ENCODE measurements at regions of chr3 and their contacts with region 1.

Region 1: GRCh38 chr3:163490119-163490518 is 1588.2 kb downstream of the SI start:
- DNase-seq: peak; percentile 53 to 66
- H3K4me3 ChIP-seq: no peak overlapping the region
- H3K4me3 Mint-ChIP-seq: no peak overlapping the region
- H3K27ac Mint-ChIP-seq: no peak overlapping the region
- H3K4me1 ChIP-seq: no peaks in the 10 kb centered on the region
- H3K4me1 Mint-ChIP-seq: no peaks in the 10 kb centered on the region
- H3K27me3 ChIP-seq: no peaks in the 10 kb centered on the region
- H3K27me3 Mint-ChIP-seq: no peaks in the 10 kb centered on the region
- CTCF ChIP-seq: peak; percentile 47 to 61

Region 2: DNA sequence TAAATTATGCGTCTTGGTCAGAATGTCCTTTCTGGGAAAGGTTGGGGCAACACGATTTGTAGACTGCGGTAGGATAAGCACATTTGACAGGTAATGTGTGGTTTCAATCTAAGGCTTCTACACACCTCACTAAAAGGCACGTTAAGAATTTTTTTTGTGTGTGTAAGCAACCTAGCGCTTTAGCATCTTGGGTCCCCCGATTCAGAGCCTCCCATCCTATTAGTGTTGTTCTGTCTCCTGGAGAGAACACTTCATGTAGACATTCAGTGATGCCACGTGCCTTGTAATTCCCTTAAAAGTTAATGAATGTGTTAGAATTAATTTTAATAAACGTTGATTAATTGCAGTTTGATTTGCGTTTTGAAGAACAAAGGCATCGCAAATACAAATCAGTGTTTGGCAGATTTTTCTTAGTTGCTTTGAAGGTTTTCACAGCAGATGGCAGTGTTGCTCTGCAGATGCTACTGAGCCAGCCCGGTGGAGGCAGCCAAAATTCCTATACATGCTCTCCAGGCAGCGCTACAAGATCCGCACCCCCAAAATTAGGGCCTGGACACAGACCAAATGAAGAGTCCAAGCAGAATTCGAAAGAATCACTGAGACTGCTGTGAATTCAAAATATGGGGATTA is 1930.0 kb before region 1 on chr3:
- CTCF ChIA-PET with region 1: no interaction called
- POLR2A ChIA-PET with region 1: no interaction called
- intact Hi-C with region 1: loop called (anchors 1 kb)
- DNase-seq: peak; percentile 36 to 47
- H3K4me3 ChIP-seq: no peak overlapping the region
- H3K4me3 Mint-ChIP-seq: no peak overlapping the region
- H3K27ac Mint-ChIP-seq: no peak overlapping the region
- H3K4me1 ChIP-seq: no peaks in the 10 kb centered on the region
- H3K4me1 Mint-ChIP-seq: no peaks in the 10 kb centered on the region
- H3K27me3 ChIP-seq: no peaks in the 10 kb centered on the region
- H3K27me3 Mint-ChIP-seq: peaks cover 6% of the 10 kb centered on the region
- CTCF ChIP-seq: peak; percentile 53 to 56

Region 3: GRCh38 chr3:163056874-163057497 is 433.1 kb before region 1 on chr3:
- CTCF ChIA-PET with region 1: no interaction called
- POLR2A ChIA-PET with region 1: no interaction called
- intact Hi-C with region 1: loop called (anchors 1 kb)
- DNase-seq: peak in 1 of 2 experiments; percentile 67
- H3K4me3 ChIP-seq: no peak overlapping the region
- H3K4me3 Mint-ChIP-seq: no peak overlapping the region
- H3K27ac Mint-ChIP-seq: no peak overlapping the region
- H3K4me1 ChIP-seq: no peaks in the 10 kb centered on the region
- H3K4me1 Mint-ChIP-seq: no peaks in the 10 kb centered on the region
- H3K27me3 ChIP-seq: no peaks in the 10 kb centered on the region
- H3K27me3 Mint-ChIP-seq: no peaks in the 10 kb centered on the region
- CTCF ChIP-seq: peak; percentile 56 to 61

Region 4: GRCh38 chr3:163450698-163451097 is 39.4 kb before region 1 on chr3:
- CTCF ChIA-PET with region 1: no interaction called
- POLR2A ChIA-PET with region 1: no interaction called
- intact Hi-C with region 1: no loop called
- DNase-seq: no peak
- H3K4me3 ChIP-seq: no peak overlapping the region
- H3K4me3 Mint-ChIP-seq: no peak overlapping the region
- H3K27ac Mint-ChIP-seq: no peak overlapping the region
- H3K4me1 ChIP-seq: no peaks in the 10 kb centered on the region
- H3K4me1 Mint-ChIP-seq: no peaks in the 10 kb centered on the region
- H3K27me3 ChIP-seq: no peaks in the 10 kb centered on the region
- H3K27me3 Mint-ChIP-seq: no peaks in the 10 kb centered on the region
- CTCF ChIP-seq: no peak

Region 5: DNA sequence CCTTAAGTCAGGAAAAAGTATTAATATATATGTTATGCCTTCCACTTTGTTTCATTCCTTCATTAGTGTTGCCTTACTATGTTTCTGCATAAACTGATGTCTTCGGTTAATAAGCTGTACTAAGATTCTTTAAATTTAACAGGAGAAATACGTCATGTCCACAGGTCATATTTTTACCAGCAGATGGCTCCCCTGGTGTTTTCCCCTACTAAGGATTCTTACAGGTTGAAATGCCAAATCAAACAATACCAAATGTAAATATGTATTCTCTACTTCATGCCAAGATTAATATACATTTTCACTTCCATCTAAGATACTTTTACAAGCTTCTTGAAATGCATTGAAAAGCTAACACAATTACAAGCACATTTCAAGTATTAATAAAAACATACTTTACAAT is 13.9 kb before region 1 on chr3:
- CTCF ChIA-PET with region 1: interaction called, 3 read pairs
- POLR2A ChIA-PET with region 1: no interaction called
- intact Hi-C with region 1: loop called (anchors 2 kb)
- DNase-seq: peak in 1 of 2 experiments; percentile 13
- H3K4me3 ChIP-seq: no peak overlapping the region
- H3K4me3 Mint-ChIP-seq: no peak overlapping the region
- H3K27ac Mint-ChIP-seq: no peak overlapping the region
- H3K4me1 ChIP-seq: no peaks in the 10 kb centered on the region
- H3K4me1 Mint-ChIP-seq: no peaks in the 10 kb centered on the region
- H3K27me3 ChIP-seq: no peaks in the 10 kb centered on the region
- H3K27me3 Mint-ChIP-seq: no peaks in the 10 kb centered on the region
- CTCF ChIP-seq: peak; percentile 12 to 17

Region 6: GRCh38 chr3:163513258-163513657 is 23.1 kb after region 1 on chr3:
- CTCF ChIA-PET with region 1: no interaction called
- POLR2A ChIA-PET with region 1: no interaction called
- intact Hi-C with region 1: no loop called
- DNase-seq: no peak
- H3K4me3 ChIP-seq: no peak overlapping the region
- H3K4me3 Mint-ChIP-seq: no peak overlapping the region
- H3K27ac Mint-ChIP-seq: no peak overlapping the region
- H3K4me1 ChIP-seq: no peaks in the 10 kb centered on the region
- H3K4me1 Mint-ChIP-seq: no peaks in the 10 kb centered on the region
- H3K27me3 ChIP-seq: no peaks in the 10 kb centered on the region
- H3K27me3 Mint-ChIP-seq: no peaks in the 10 kb centered on the region
- CTCF ChIP-seq: no peak

Region 7: DNA sequence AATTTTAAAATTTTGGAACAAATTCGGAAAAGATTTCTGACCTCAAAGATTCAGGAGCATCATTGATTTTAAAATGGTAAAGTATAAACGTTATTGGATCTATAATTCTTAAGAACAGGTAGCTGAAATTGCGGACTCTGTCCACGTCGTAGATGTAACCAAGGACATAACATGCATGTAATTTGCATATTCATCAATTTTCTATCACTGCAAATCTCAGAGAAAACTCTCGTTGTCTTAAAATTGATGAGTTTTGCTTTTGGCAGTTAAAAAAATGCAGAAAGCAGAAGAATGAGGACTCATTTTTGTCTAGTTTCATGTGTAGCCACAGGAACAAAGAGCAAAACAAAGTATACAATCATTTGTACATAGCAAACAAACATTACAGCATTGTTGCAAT is 493.8 kb after region 1 on chr3:
- CTCF ChIA-PET with region 1: no interaction called
- POLR2A ChIA-PET with region 1: no interaction called
- intact Hi-C with region 1: no loop called
- DNase-seq: no peak
- H3K4me3 ChIP-seq: no peak overlapping the region
- H3K4me3 Mint-ChIP-seq: no peak overlapping the region
- H3K27ac Mint-ChIP-seq: no peak overlapping the region
- H3K4me1 ChIP-seq: no peaks in the 10 kb centered on the region
- H3K4me1 Mint-ChIP-seq: no peaks in the 10 kb centered on the region
- H3K27me3 ChIP-seq: no peaks in the 10 kb centered on the region
- H3K27me3 Mint-ChIP-seq: no peaks in the 10 kb centered on the region
- CTCF ChIP-seq: no peak